Colonic mucosa (tissue), 4 donors: ENCODE measurements at regions of chr13 and their contacts with region 1.

Region 1: GRCh38 chr13:95536632-95537241 is 15.8 kb upstream of the CLDN10 start:
- DNase-seq: no peak
- H3K4me3 ChIP-seq: no peak overlapping the region
- H3K27ac ChIP-seq: no peak overlapping the region
- H3K4me1 ChIP-seq: no peaks in the 10 kb centered on the region
- H3K27me3 ChIP-seq: no peaks in the 10 kb centered on the region
- CTCF ChIP-seq: peak; percentile 32

Region 2: DNA sequence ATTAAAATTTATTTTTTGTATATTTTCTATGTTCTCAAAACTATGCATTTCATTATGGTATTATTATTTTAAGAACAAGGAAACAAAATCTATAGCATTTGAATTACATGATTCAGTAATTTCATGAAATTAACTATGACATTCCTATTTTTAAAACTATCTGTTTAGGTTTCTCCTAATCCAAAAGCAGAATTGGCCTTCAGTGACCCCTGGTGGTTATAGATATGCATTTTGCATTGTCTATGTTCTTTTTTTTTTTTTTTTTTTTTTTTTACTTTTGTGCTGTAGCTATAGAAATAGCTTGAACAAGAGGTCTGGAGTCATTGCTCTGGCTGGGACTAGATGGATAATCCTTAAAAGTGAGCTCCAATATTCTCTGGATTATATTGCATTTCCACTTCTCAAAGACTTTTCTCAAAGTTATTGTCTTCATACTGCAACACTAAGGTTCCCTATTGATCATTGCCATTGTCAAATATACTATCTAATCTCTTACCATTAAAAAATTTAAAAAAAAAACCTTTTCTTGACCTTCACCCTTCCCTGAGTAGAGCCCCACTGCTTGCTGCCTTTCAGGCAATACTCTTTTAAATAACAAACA is 124.3 kb after region 1 on chr13:
- intact Hi-C with region 1: loop called (anchors 5 kb)
- DNase-seq: no peak
- H3K4me3 ChIP-seq: no peak overlapping the region
- H3K27ac ChIP-seq: no peak overlapping the region
- H3K4me1 ChIP-seq: no peaks in the 10 kb centered on the region
- H3K27me3 ChIP-seq: no peaks in the 10 kb centered on the region
- CTCF ChIP-seq: peak; percentile 60

Region 3: GRCh38 chr13:95834134-95834765 is 297.5 kb after region 1 on chr13:
- intact Hi-C with region 1: loop called (anchors 5 kb)
- DNase-seq: peak; percentile 62
- H3K4me3 ChIP-seq: no peak overlapping the region
- H3K27ac ChIP-seq: no peak overlapping the region
- H3K4me1 ChIP-seq: no peaks in the 10 kb centered on the region
- H3K27me3 ChIP-seq: no peaks in the 10 kb centered on the region
- CTCF ChIP-seq: peak; percentile 80